Body of pancreas (tissue), 4 donors: ENCODE measurements at regions of chr15 and their contacts with region 1.

Region 1: GRCh38 chr15:49036650-49037545 is 9.3 kb downstream of the SECISBP2L start:
- DNase-seq: no peak
- ATAC-seq: no peak
- H3K4me3 ChIP-seq: no peak overlapping the region
- H3K27ac ChIP-seq: no peak overlapping the region
- H3K4me1 ChIP-seq: peaks cover 11% of the 10 kb centered on the region
- H3K27me3 ChIP-seq: no peaks in the 10 kb centered on the region
- CTCF ChIP-seq: no peak
- POLR2A ChIP-seq: no peak

Region 2: DNA sequence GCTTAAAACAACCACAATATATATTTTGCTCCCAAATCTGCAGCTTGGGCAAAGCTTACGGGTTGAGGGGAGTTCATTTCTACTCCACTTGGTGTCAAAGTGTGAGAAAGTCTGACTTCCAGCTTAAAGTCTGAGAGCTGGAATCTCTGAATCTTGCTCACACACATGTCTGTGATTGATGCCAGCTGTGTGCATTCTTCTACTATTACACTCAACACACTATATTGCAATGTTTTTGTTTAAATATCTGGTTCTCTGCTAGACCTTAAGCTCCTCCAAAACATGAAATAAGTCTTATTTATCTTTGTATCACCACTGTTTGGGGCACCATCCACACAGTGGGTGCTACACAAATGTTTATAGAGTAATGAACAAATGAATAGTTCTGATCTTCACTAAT is 46.1 kb after region 1 on chr15:
- intact Hi-C with region 1: no loop called
- DNase-seq: no peak
- ATAC-seq: no peak
- H3K4me3 ChIP-seq: no peak overlapping the region
- H3K27ac ChIP-seq: no peak overlapping the region
- H3K4me1 ChIP-seq: peaks cover 11% of the 10 kb centered on the region
- H3K27me3 ChIP-seq: no peaks in the 10 kb centered on the region
- CTCF ChIP-seq: no peak
- POLR2A ChIP-seq: no peak

Region 3: DNA sequence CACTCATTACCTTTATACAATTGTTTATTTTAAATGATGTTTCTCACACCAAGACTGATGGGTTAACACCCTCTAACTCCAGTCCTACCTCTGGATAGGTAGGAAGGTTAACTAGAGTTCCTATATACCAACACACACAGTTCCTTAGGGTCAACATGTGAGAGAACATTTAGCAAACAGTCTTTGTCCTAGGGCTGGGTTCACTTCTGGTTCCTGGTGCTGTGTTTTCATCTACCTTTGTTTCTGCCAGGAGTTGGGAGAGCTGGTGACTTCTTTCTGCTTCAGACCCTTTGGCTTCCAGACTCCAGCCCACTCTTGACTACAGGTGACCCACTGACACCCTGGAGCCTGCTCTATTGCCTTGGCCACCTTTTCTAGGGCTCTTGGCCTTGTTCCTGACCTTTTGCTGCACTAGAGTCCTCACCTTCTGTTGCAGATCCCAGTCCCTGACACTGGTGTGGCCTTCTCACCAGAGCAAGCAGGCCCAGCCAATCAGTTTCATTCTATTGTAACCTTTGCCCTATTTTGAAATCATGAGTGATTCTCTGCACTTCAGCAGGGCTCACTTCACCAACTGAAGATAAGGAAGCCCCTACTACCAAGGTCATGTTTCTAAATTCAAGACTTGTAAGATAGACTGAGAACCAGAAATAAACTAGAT is 59.3 kb after region 1 on chr15:
- intact Hi-C with region 1: loop called (anchors 10 kb)
- DNase-seq: peak in 1 of 4 donors; percentile 9
- ATAC-seq: no peak
- H3K4me3 ChIP-seq: no peak overlapping the region
- H3K27ac ChIP-seq: no peak overlapping the region
- H3K4me1 ChIP-seq: peaks cover 9% of the 10 kb centered on the region
- H3K27me3 ChIP-seq: no peaks in the 10 kb centered on the region
- CTCF ChIP-seq: no peak
- POLR2A ChIP-seq: no peak